CD8-positive, alpha-beta T cell (primary cell): ENCODE measurements at regions of chr9 and their contacts with region 1.

Region 1: DNA sequence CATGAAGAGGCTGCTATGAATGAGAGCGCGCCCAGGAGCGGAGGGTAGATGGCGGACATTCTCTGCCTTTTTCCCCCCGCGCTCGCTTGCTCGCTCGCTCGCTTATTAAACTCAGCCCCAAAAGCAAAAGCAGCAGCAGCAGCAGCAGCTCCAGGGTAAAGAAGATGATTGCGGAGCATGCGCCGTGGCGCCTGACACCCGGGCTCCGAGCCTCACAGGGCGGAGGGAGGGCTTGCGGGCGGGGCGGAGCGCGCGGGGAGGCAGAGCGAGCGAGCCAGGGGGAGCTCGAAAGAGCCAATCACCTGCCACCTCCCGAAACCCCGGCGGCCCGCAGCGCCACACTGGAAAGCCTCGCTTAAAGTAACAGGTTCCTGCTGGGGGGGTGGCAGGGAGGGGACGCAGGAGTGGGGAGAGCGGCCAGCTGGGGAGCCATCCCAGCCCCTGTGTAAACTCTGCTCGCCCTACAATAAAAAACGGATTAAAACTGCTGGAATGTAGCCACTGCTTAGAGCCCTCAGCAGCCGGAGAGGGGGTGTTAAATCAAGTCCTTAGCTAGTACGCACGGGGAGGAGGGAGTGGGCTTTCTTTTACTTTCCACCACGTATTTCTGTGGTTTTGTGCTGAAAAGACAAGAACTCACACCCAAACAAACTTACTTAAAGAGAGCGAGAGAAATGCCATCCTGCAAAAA is at the start of gene MLLT3:
- DNase-seq: peak; percentile 95 to 98 (median 97)
- ATAC-seq: peak; percentile 74
- H3K4me3 ChIP-seq: peak within 1 kb of the TSS; percentile 97 to 98
- H3K4me3 Mint-ChIP-seq: peak within 1 kb of the TSS; percentile 98
- H3K27ac ChIP-seq: peak within 1 kb of the TSS; percentile 75 to 88
- H3K27ac Mint-ChIP-seq: peak within 1 kb of the TSS; percentile 99
- H3K4me1 ChIP-seq: peaks cover 41% of the 10 kb centered on the region
- H3K4me1 Mint-ChIP-seq: peaks cover 46% of the 10 kb centered on the region
- H3K27me3 ChIP-seq: no peaks in the 10 kb centered on the region
- H3K27me3 Mint-ChIP-seq: no peaks in the 10 kb centered on the region
- CTCF ChIP-seq: no peak
- total RNA-seq, gene MLLT3: 40.3 to 44.5 TPM

Region 2: GRCh38 chr9:20319641-20320337 is 302.7 kb before region 1 on chr9:
- CTCF ChIA-PET with region 1: interaction called, 3 read pairs
- POLR2A ChIA-PET with region 1: interaction called, 8 read pairs
- intact Hi-C with region 1: loop called in 1 of 2 experiments (anchors 2 kb)
- DNase-seq: peak in 3 of 9 experiments; percentile 8 to 42 (median 34)
- ATAC-seq: peak; percentile 39
- H3K4me3 ChIP-seq: no peak overlapping the region
- H3K4me3 Mint-ChIP-seq: no peak overlapping the region
- H3K27ac ChIP-seq: peak overlapping the region in 1 of 2 experiments; percentile 50
- H3K27ac Mint-ChIP-seq: peak overlapping the region; percentile 82
- H3K4me1 ChIP-seq: peaks cover 58% of the 10 kb centered on the region
- H3K4me1 Mint-ChIP-seq: peaks cover 89% of the 10 kb centered on the region
- H3K27me3 ChIP-seq: no peaks in the 10 kb centered on the region
- H3K27me3 Mint-ChIP-seq: no peaks in the 10 kb centered on the region
- CTCF ChIP-seq: no peak

Region 3: GRCh38 chr9:20508242-20508641 is 114.2 kb before region 1 on chr9:
- CTCF ChIA-PET with region 1: interaction called, 4 read pairs
- POLR2A ChIA-PET with region 1: no interaction called
- intact Hi-C with region 1: loop called in 1 of 2 experiments (anchors 5 kb)
- DNase-seq: peak in 1 of 9 experiments; percentile 14
- ATAC-seq: peak; percentile 15
- H3K4me3 ChIP-seq: no peak overlapping the region
- H3K4me3 Mint-ChIP-seq: peak overlapping the region; percentile 17
- H3K27ac ChIP-seq: no peak overlapping the region
- H3K27ac Mint-ChIP-seq: peak overlapping the region; percentile 63
- H3K4me1 ChIP-seq: peaks cover 44% of the 10 kb centered on the region
- H3K4me1 Mint-ChIP-seq: peaks cover 80% of the 10 kb centered on the region
- H3K27me3 ChIP-seq: no peaks in the 10 kb centered on the region
- H3K27me3 Mint-ChIP-seq: no peaks in the 10 kb centered on the region
- CTCF ChIP-seq: no peak

Region 4: GRCh38 chr9:20611751-20612287 is 10.7 kb before region 1 on chr9:
- CTCF ChIA-PET with region 1: interaction called, 5 read pairs
- POLR2A ChIA-PET with region 1: interaction called, 4 read pairs
- intact Hi-C with region 1: loop called in 1 of 2 experiments (anchors 1 kb)
- DNase-seq: peak in 2 of 9 experiments; percentile 19 to 46
- ATAC-seq: peak; percentile 71
- H3K4me3 ChIP-seq: no peak overlapping the region
- H3K4me3 Mint-ChIP-seq: no peak overlapping the region
- H3K27ac ChIP-seq: no peak overlapping the region
- H3K27ac Mint-ChIP-seq: no peak overlapping the region
- H3K4me1 ChIP-seq: peaks cover 33% of the 10 kb centered on the region
- H3K4me1 Mint-ChIP-seq: peaks cover 72% of the 10 kb centered on the region
- H3K27me3 ChIP-seq: no peaks in the 10 kb centered on the region
- H3K27me3 Mint-ChIP-seq: no peaks in the 10 kb centered on the region
- CTCF ChIP-seq: peak; percentile 58

Region 5: DNA sequence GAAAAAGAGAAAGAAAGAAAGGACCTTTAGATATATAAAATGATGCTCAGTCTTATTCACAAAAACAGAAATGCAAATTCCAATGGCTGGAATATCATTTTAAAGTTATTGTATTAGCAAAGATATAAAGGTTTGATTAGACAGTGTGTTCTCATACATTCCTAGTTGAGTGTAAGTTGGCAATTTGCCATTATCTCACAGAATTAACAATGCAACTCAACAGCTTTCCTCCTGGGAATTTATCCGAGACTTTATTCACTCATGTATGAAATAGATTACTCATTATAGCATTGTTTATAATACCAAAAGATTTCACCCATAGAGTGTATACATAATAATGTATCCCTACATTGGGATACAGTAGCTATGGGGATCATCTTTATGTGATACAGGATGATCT is 26.9 kb after region 1 on chr9:
- CTCF ChIA-PET with region 1: no interaction called
- POLR2A ChIA-PET with region 1: no interaction called
- intact Hi-C with region 1: no loop called
- DNase-seq: no peak
- ATAC-seq: no peak
- H3K4me3 ChIP-seq: no peak overlapping the region
- H3K4me3 Mint-ChIP-seq: no peak overlapping the region
- H3K27ac ChIP-seq: no peak overlapping the region
- H3K27ac Mint-ChIP-seq: no peak overlapping the region
- H3K4me1 ChIP-seq: no peaks in the 10 kb centered on the region
- H3K4me1 Mint-ChIP-seq: no peaks in the 10 kb centered on the region
- H3K27me3 ChIP-seq: peaks cover 0 to 3% of the 10 kb centered on the region in 2 experiments
- H3K27me3 Mint-ChIP-seq: peaks cover 2% of the 10 kb centered on the region
- CTCF ChIP-seq: no peak

Region 6: GRCh38 chr9:20815923-20816703 is 193.6 kb after region 1 on chr9:
- CTCF ChIA-PET with region 1: no interaction called
- POLR2A ChIA-PET with region 1: no interaction called
- intact Hi-C with region 1: no loop called
- DNase-seq: no peak
- ATAC-seq: no peak
- H3K4me3 ChIP-seq: no peak overlapping the region
- H3K4me3 Mint-ChIP-seq: no peak overlapping the region
- H3K27ac ChIP-seq: no peak overlapping the region
- H3K27ac Mint-ChIP-seq: no peak overlapping the region
- H3K4me1 ChIP-seq: no peaks in the 10 kb centered on the region
- H3K4me1 Mint-ChIP-seq: no peaks in the 10 kb centered on the region
- H3K27me3 ChIP-seq: no peaks in the 10 kb centered on the region
- H3K27me3 Mint-ChIP-seq: no peaks in the 10 kb centered on the region
- CTCF ChIP-seq: no peak

Region 7: DNA sequence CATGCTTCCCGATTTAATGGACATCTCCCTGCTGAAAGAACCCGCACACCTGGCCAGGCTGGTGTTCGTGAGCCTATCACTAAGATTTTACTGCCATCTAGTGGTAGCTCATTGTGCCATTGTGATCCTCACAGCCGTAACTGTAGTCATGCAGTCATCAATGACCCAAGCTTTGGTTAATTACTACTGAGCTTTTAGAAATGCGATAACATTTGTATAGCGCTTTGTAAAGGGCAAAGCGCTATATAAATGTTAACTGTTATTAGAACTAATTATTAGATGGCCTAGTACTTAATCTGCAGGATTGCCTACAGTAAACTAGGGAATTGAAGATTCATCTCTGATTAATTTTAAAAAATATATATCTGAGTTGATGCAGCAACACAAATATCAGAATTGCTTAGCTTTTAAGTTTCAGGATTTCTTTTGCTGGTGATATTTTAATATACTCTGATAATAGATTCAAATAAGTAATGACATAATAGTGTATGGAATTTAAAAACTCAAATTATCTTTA is 318.8 kb after region 1 on chr9:
- CTCF ChIA-PET with region 1: interaction called, 34 read pairs
- POLR2A ChIA-PET with region 1: interaction called, 6 read pairs
- intact Hi-C with region 1: loop called (anchors 1 kb)
- DNase-seq: peak; percentile 4 to 80 (median 45)
- ATAC-seq: peak; percentile 90
- H3K4me3 ChIP-seq: no peak overlapping the region
- H3K4me3 Mint-ChIP-seq: no peak overlapping the region
- H3K27ac ChIP-seq: no peak overlapping the region
- H3K27ac Mint-ChIP-seq: no peak overlapping the region
- H3K4me1 ChIP-seq: peaks cover 3% of the 10 kb centered on the region
- H3K4me1 Mint-ChIP-seq: peaks cover 3% of the 10 kb centered on the region
- H3K27me3 ChIP-seq: no peaks in the 10 kb centered on the region
- H3K27me3 Mint-ChIP-seq: no peaks in the 10 kb centered on the region
- CTCF ChIP-seq: peak; percentile 82

Region 8: GRCh38 chr9:21789541-21790037 is 1167.1 kb after region 1 on chr9:
- CTCF ChIA-PET with region 1: no interaction called
- POLR2A ChIA-PET with region 1: no interaction called
- intact Hi-C with region 1: loop called in 1 of 2 experiments (anchors 10 kb)
- DNase-seq: peak in 6 of 9 experiments; percentile 46 to 89 (median 62)
- ATAC-seq: peak; percentile 94
- H3K4me3 ChIP-seq: peak overlapping the region; percentile 18 to 33
- H3K4me3 Mint-ChIP-seq: peak overlapping the region; percentile 80
- H3K27ac ChIP-seq: no peak overlapping the region
- H3K27ac Mint-ChIP-seq: peak overlapping the region; percentile 71
- H3K4me1 ChIP-seq: no peaks in the 10 kb centered on the region
- H3K4me1 Mint-ChIP-seq: no peaks in the 10 kb centered on the region
- H3K27me3 ChIP-seq: no peaks in the 10 kb centered on the region
- H3K27me3 Mint-ChIP-seq: peaks cover 8% of the 10 kb centered on the region
- CTCF ChIP-seq: peak; percentile 86